MCF 10A (cell line): ENCODE measurements at regions of chr4 and their contacts with region 1.

Region 1: DNA sequence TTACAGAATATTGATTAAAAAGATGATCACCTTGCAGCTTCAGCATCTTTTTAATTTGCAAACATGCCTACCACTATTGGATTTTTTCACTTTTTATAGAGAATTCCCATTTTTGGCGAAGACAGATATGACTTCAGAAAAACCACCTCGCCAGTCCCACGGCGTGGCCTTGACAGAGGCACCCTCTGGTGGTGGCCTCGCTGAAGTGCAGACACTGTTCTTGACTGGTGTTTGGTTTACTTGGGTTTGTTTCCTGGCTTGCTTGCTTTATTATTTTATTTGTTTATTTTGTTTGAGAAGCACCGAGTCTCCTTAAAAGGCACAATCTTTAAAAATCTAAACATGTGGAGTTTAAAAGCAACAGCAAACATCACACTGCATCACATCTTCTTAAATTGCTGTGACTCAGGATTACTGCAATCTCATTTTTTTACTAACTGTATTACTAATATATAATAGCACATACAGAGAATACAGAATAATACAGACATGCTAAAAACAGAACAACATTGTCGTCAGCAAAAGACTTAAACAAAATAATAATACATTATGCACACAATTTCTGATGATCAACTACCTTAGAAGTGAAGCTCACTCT is 13.1 kb upstream of the AMTN start:
- DNase-seq: peak; percentile 64
- H3K4me3 Mint-ChIP-seq: no peak overlapping the region
- H3K27ac Mint-ChIP-seq: no peak overlapping the region
- H3K4me1 Mint-ChIP-seq: no peaks in the 10 kb centered on the region
- H3K27me3 Mint-ChIP-seq: peaks cover 11% of the 10 kb centered on the region
- CTCF ChIP-seq: peak; percentile 89

Region 2: GRCh38 chr4:69896530-69897116 is 608.6 kb before region 1 on chr4:
- CTCF ChIA-PET with region 1: interaction called, 22 read pairs
- POLR2A ChIA-PET with region 1: no interaction called
- intact Hi-C with region 1: loop called (anchors 1 kb)
- DNase-seq: peak; percentile 27
- H3K4me3 Mint-ChIP-seq: no peak overlapping the region
- H3K27ac Mint-ChIP-seq: no peak overlapping the region
- H3K4me1 Mint-ChIP-seq: no peaks in the 10 kb centered on the region
- H3K27me3 Mint-ChIP-seq: peaks cover 79% of the 10 kb centered on the region
- CTCF ChIP-seq: peak; percentile 58

Region 3: DNA sequence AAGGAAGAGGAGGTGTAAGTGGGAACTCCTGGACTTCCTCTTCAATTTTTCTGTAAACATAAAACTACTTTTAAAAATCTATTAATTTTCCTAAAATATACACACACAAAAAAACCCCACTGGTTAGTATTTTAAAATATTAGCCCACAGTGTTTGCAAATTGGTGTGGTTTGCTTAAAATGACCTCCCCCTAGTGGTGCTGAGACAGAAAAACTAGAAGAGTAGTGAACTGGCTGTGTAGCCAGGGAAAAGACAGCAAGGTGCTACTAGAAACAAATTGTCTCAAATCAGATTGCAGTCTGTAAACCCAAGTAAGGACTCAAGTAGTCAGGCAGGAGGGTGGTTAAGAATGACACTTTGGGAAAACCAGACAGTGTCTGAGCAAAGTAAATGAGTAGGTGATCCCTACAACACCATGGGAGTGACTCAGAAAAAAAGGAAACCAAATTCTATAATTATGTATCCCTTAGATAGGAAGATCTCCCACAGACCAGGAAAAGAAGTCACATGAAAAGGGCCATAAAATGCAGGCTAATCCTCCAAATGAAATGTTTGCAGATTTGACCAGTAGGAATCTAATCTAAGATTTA is 39.1 kb after region 1 on chr4:
- CTCF ChIA-PET with region 1: interaction called, 5 read pairs
- POLR2A ChIA-PET with region 1: no interaction called
- intact Hi-C with region 1: loop called (anchors 1 kb)
- DNase-seq: peak; percentile 49
- H3K4me3 Mint-ChIP-seq: no peak overlapping the region
- H3K27ac Mint-ChIP-seq: no peak overlapping the region
- H3K4me1 Mint-ChIP-seq: no peaks in the 10 kb centered on the region
- H3K27me3 Mint-ChIP-seq: no peaks in the 10 kb centered on the region
- CTCF ChIP-seq: peak; percentile 48